ENCODE measurements at regions of chr17 and their contacts with region 1.

Region 1: DNA sequence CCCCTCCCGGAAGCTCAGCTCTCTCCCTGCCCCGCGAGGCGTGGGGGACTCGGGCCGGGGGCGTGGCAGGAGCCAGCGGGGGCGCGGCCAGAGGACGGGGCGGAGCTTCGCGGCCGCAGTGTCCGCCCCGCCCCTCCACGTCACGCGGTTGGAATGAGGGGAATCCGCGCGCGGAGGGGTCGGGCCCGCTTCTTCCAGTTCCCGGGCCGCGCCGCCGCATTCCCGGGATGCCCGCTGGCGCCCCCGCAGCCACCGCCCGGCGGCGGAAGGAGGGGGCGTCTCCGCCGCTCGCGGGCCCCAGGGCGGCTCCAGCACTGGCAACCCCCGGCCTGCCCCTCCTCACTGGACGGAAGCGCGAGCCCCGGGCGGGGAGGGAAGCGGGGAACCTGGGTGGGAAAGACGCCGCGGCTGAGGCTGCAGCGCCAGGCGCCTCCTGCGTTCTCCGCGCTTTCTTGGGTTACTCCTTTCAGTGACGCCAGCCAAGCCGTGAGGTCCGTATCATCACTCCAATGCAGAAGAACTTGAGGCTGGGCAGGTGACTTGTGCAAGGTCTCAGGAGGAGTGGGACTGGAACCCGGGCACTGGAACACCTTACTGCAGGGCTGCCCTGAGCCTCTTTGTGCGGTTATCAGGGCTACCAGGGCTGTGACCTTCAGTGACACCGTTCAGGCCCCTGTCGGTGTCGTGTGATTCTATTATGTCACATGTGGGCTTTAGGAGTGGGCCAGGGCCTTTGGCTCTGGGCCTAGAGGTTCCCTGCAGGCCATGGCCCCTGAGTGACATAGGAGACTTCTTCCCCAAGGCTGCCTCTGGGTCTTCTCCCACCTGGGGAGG is 4.2 kb downstream of the MYO1C start:
- DNase-seq: no peak
- ATAC-seq: peak; percentile 35
- H3K4me3 ChIP-seq: peak overlapping the region; percentile 70 to 71
- H3K27ac ChIP-seq: peak overlapping the region; percentile 99
- H3K4me1 ChIP-seq: peaks cover 27 to 76% of the 10 kb centered on the region in 2 experiments
- H3K27me3 ChIP-seq: no peaks in the 10 kb centered on the region
- CTCF ChIP-seq: no peak
- POLR2A ChIP-seq: peak; percentile 59
- RAD21 ChIP-seq: no peak

Region 2: DNA sequence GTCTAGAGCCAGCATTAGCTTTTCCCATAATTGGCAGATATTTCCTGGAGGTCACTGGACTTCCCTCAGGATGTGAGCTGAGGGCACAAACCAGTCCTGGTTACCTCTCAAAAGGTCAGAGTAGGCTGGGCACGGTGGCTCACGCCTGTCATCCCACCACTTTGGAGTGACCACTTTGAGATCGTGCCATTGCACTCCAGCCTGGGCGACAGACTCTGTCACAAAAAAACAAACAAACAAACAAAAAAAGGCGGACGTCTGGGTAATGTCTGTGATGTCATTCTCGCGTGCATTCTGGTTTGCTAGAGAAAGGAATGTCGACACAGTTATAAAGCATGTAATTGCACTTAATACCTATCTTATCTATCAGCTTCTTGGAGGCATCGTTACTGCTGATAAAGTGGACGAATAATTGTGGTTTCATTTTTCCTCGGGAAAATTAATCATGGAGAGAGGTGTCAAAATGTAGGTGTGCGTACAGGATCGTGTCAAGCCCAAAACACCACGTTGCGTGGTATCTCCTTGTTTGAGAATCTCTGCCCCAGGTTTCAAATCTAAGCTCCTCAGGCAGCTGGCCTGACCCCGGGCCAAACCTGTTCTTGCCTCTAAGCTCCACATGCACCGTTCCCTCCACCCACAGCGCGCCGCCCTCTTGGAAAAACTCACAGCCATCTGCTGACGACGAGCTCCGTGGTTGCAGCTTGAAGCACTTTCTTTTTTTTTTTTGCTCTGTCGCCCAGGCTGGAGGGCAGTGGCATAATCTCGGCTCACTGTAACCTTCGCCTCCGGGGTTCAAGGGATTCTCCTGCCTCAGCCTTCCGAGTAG is 25.7 kb before region 1 on chr17:
- CTCF ChIA-PET with region 1: no interaction called
- POLR2A ChIA-PET with region 1: interaction called, 16 read pairs
- RAD21 ChIA-PET with region 1: interaction called in 1 of 2 experiments, 3 read pairs
- intact Hi-C with region 1: no loop called
- DNase-seq: no peak
- ATAC-seq: peak; percentile 40
- H3K4me3 ChIP-seq: peak overlapping the region; percentile 53 to 64
- H3K27ac ChIP-seq: peak overlapping the region; percentile 89
- H3K4me1 ChIP-seq: peaks cover 32 to 52% of the 10 kb centered on the region in 2 experiments
- H3K27me3 ChIP-seq: no peaks in the 10 kb centered on the region
- CTCF ChIP-seq: no peak
- POLR2A ChIP-seq: peak; percentile 56
- RAD21 ChIP-seq: no peak

Region 3: GRCh38 chr17:1516388-1517161 is 28.3 kb after region 1 on chr17 and contains the start of gene INPP5K:
- CTCF ChIA-PET with region 1: interaction called, 5 read pairs
- POLR2A ChIA-PET with region 1: interaction called, 14 read pairs
- RAD21 ChIA-PET with region 1: interaction called in 1 of 2 experiments, 4 read pairs
- intact Hi-C with region 1: loop called (anchors 2 kb)
- DNase-seq: peak; percentile 94
- ATAC-seq: peak; percentile 96
- H3K4me3 ChIP-seq: peak within 1 kb of the TSS; percentile 91 to 95
- H3K27ac ChIP-seq: peak within 1 kb of the TSS; percentile 82
- H3K4me1 ChIP-seq: peaks cover 13 to 29% of the 10 kb centered on the region in 2 experiments
- H3K27me3 ChIP-seq: no peaks in the 10 kb centered on the region
- CTCF ChIP-seq: 0 out of 6 replicates have a peak, but pooled peaks of 1 of the 3 experiments have one; percentile 8
- POLR2A ChIP-seq: peak; percentile 62
- RAD21 ChIP-seq: no peak
- total RNA-seq, gene INPP5K: 25.6 TPM

Region 4: GRCh38 chr17:1628856-1629646 is 140.8 kb after region 1 on chr17:
- CTCF ChIA-PET with region 1: interaction called, 3 read pairs
- POLR2A ChIA-PET with region 1: no interaction called
- RAD21 ChIA-PET with region 1: no interaction called
- intact Hi-C with region 1: loop called (anchors 10 kb)
- DNase-seq: peak; percentile 82
- ATAC-seq: peak; percentile 81
- H3K4me3 ChIP-seq: peak overlapping the region; percentile 85 to 93
- H3K27ac ChIP-seq: peak overlapping the region; percentile 65
- H3K4me1 ChIP-seq: peaks cover 13 to 41% of the 10 kb centered on the region in 2 experiments
- H3K27me3 ChIP-seq: no peaks in the 10 kb centered on the region
- CTCF ChIP-seq: peak in 2 of 3 experiments; percentile 16 to 44; a peak in 1 of 6 replicates
- POLR2A ChIP-seq: no peak
- RAD21 ChIP-seq: no peak; the same call in none of the 2 replicates

Measured in HCT116 (cell line).